ENCODE measurements at regions of chr17 and their contacts with region 1.

Region 1: GRCh38 chr17:7687908-7688807 is at the start of gene WRAP53:
- DNase-seq: peak; percentile 99
- H3K4me3 ChIP-seq: peak within 1 kb of the TSS; percentile 79 to 100 (median 96)
- H3K27ac ChIP-seq: peak within 1 kb of the TSS; percentile 98
- H3K4me1 ChIP-seq: peaks cover 24% of the 10 kb centered on the region
- H3K27me3 ChIP-seq: no peaks in the 10 kb centered on the region
- CTCF ChIP-seq: peak; percentile 95 to 97
- total RNA-seq, gene WRAP53: 4.3 to 15.9 TPM

Region 2: GRCh38 chr17:7280519-7281429 is 407.4 kb before region 1 on chr17:
- CTCF ChIA-PET with region 1: no interaction called
- dilution Hi-C with region 1: no loop called
- in situ Hi-C with region 1: no loop called
- intact Hi-C with region 1: loop called (anchors 1 kb)
- DNase-seq: peak; percentile 78
- H3K4me3 ChIP-seq: peak overlapping the region; percentile 47 to 49 (median 48)
- H3K27ac ChIP-seq: peak overlapping the region; percentile 24
- H3K4me1 ChIP-seq: peaks cover 22% of the 10 kb centered on the region
- H3K27me3 ChIP-seq: no peaks in the 10 kb centered on the region
- CTCF ChIP-seq: peak; percentile 95 to 97

Region 3: DNA sequence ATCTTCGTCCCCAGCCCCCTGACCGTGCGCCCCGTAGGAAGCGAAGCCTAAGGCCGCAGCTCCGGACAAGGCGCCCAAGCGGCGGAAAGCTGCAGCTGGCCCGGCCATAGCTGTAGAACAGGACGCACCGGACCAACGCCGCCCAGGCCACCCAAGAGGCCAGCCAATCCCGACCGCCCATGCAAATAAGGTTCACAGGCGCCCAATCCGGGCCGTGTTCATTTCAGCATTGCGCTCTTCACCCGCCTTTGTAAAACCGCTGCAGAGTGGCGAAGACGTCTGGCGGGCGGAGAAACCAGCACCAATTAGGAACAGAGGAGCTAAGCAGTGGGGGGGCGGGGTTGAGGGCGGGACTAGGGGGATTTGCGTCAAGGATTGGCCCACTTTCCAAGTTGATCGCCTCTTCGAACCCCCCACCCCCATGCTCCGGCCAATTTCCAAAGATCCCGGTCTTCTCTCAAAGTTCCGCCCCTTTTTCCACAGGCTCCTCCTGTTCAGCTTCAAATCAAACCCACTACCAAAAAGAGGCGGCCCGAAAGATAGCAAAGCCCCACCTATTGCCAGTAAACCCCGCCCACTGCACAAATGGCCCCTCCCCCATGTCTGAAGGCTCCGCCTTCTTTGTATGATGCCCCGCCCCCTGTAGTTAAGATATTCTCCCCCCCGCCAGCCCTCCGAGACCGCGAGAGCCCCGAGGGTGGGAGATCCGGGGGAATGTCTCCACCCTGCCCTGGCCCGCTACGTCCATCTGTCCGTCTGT is 284.0 kb before region 1 on chr17 and contains the start of gene TMEM256:
- CTCF ChIA-PET with region 1: no interaction called
- dilution Hi-C with region 1: no loop called
- in situ Hi-C with region 1: no loop called
- intact Hi-C with region 1: loop called (anchors 5 kb)
- DNase-seq: peak; percentile 99
- H3K4me3 ChIP-seq: peak within 1 kb of the TSS; percentile 66 to 86 (median 70)
- H3K27ac ChIP-seq: peak within 1 kb of the TSS; percentile 42
- H3K4me1 ChIP-seq: peaks cover 7% of the 10 kb centered on the region
- H3K27me3 ChIP-seq: no peaks in the 10 kb centered on the region
- CTCF ChIP-seq: no peak
- total RNA-seq, gene TMEM256: 43.8 to 70.8 TPM

Region 4: GRCh38 chr17:7515911-7516610 is 172.1 kb before region 1 on chr17:
- CTCF ChIA-PET with region 1: no interaction called
- dilution Hi-C with region 1: no loop called
- in situ Hi-C with region 1: no loop called
- intact Hi-C with region 1: loop called (anchors 1 kb)
- DNase-seq: no peak
- H3K4me3 ChIP-seq: no peak overlapping the region
- H3K27ac ChIP-seq: no peak overlapping the region
- H3K4me1 ChIP-seq: no peaks in the 10 kb centered on the region
- H3K27me3 ChIP-seq: no peaks in the 10 kb centered on the region
- CTCF ChIP-seq: no peak

Region 5: GRCh38 chr17:7589204-7589868 is 98.8 kb before region 1 on chr17:
- CTCF ChIA-PET with region 1: interaction called, 7 read pairs
- dilution Hi-C with region 1: loop called (anchors 5 kb)
- in situ Hi-C with region 1: no loop called
- intact Hi-C with region 1: loop called (anchors 1 kb)
- DNase-seq: peak; percentile 83
- H3K4me3 ChIP-seq: peak overlapping the region; percentile 69 to 82 (median 69)
- H3K27ac ChIP-seq: peak overlapping the region; percentile 77
- H3K4me1 ChIP-seq: peaks cover 54% of the 10 kb centered on the region
- H3K27me3 ChIP-seq: no peaks in the 10 kb centered on the region
- CTCF ChIP-seq: peak; percentile 68 to 92

Region 6: GRCh38 chr17:7632492-7632894 is 55.7 kb before region 1 on chr17:
- CTCF ChIA-PET with region 1: interaction called, 11 read pairs
- dilution Hi-C with region 1: no loop called
- in situ Hi-C with region 1: loop called in 1 of 2 experiments (anchors 5 kb)
- intact Hi-C with region 1: loop called (anchors 1 kb)
- DNase-seq: peak; percentile 39
- H3K4me3 ChIP-seq: no peak overlapping the region
- H3K27ac ChIP-seq: no peak overlapping the region
- H3K4me1 ChIP-seq: peaks cover 2% of the 10 kb centered on the region
- H3K27me3 ChIP-seq: no peaks in the 10 kb centered on the region
- CTCF ChIP-seq: peak; percentile 61 to 77

Region 7: DNA sequence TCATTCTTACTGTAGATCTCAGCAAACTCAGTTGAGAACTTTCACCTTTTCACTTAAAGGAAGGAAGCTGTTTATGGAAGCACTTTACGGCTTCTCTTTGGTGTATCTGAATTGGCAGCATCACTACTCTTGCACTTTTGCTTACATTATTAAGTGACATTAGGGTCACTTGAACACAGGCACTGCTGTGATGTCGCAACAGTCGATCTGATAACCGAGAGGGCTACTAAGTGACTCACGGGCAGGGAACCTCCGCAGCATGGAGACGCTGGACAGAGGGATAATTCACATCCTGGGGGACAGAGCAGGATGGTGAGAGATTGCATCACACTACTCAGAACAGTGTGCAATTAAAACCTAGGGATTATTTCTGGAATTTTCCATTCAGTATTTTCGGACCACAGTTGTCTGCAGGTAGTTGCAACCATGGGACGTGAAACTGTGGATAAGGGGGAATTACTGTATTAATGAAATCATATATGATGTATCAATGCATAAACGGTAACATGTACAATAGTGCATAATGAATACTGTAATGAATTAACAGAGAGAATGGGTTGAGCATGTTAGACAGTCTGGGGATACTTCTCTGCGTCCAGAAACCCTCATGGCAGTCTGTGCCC is 86.0 kb after region 1 on chr17:
- CTCF ChIA-PET with region 1: no interaction called
- dilution Hi-C with region 1: no loop called
- in situ Hi-C with region 1: no loop called
- intact Hi-C with region 1: no loop called
- DNase-seq: no peak
- H3K4me3 ChIP-seq: no peak overlapping the region
- H3K27ac ChIP-seq: no peak overlapping the region
- H3K4me1 ChIP-seq: no peaks in the 10 kb centered on the region
- H3K27me3 ChIP-seq: no peaks in the 10 kb centered on the region
- CTCF ChIP-seq: no peak

Region 8: DNA sequence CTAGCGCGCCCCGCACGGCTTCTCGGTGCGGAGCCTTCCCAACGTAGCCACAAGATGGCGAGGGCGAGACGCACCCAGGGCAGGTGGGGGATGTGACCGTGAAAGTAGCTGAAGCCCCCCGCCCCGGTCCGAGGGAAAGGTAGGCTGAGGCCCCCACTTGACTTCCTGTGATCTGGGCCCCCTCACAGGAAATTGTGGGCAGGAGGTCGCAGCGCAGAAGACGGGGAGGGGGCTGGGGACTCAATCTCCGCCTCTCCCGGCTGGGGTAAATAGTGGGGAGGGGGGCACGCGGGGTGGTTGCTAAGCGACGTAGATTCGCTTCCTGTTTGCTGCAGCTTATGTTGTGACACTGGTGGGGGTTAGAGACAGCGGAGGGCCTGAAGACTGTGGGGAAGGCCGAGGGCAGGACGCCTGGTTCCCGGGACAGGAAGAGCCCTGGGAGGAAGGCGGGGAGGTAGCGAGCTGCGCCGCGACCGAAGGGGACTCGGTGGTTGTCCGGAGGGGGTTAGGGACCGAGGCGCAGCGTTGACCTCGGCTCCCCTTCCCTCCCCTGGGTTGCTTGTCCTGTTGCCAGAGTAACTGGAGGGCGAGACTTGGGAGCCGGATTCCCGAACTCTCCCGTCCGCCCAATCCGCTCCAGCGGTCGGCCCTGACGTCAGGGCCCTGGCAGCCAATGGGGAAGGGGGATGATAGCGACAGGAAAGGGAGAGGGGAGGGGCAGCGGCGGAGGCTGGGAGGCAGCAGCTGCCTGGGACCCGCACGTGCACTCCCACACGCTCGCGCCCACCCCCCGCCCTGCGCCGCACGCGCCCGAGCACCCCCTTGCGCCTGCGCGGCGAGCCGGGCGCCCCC is 147.0 kb after region 1 on chr17:
- CTCF ChIA-PET with region 1: no interaction called
- dilution Hi-C with region 1: no loop called
- in situ Hi-C with region 1: no loop called
- intact Hi-C with region 1: loop called (anchors 2 kb)
- DNase-seq: peak; percentile 98
- H3K4me3 ChIP-seq: peak overlapping the region; percentile 69 to 94 (median 76)
- H3K27ac ChIP-seq: peak overlapping the region; percentile 97
- H3K4me1 ChIP-seq: peaks cover 43% of the 10 kb centered on the region
- H3K27me3 ChIP-seq: no peaks in the 10 kb centered on the region
- CTCF ChIP-seq: peak; percentile 52 to 90

Measured in mammary epithelial cell (primary cell).